Body of pancreas (tissue), 4 donors: ENCODE measurements at regions of chr3 and their contacts with region 1.

Region 1: GRCh38 chr3:58573640-58574039 is 3.6 kb downstream of the FAM107A start:
- DNase-seq: no peak
- ATAC-seq: no peak
- H3K4me3 ChIP-seq: no peak overlapping the region
- H3K27ac ChIP-seq: no peak overlapping the region
- H3K4me1 ChIP-seq: peaks cover 32% of the 10 kb centered on the region
- H3K27me3 ChIP-seq: no peaks in the 10 kb centered on the region
- CTCF ChIP-seq: no peak
- POLR2A ChIP-seq: no peak

Region 2: DNA sequence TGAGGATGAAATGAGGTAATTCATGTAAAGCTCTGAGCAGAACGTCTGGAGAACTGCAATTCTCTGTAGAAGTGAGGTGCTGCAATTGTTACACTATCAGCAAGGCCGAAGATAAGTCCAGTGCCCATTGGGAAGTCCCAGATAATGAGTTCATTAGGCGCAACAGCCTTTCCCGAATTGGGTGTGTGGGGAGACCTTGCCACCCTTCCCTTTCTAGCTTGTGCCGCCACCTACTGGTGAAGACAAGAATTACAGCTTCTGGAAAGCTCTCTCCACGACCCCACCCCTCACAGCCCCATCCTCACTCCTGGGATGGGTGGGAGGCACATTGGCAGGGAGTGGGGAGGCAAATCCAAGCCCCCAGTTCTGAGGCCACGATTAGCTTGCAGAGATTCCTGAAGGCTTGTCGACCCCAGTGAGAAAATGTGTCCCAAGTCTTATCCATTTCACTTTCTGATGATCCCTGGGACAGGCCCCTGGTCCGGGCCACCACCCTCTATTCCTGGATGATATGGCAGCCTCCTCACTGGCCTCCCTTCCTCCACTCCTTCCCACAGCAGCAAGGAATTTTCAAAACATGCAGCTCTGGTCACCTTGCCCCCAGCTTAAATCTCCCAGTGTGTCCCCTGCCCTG is 56.6 kb after region 1 on chr3:
- intact Hi-C with region 1: loop called (anchors 5 kb)
- DNase-seq: peak; percentile 68 to 75 (median 71)
- ATAC-seq: peak; percentile 49
- H3K4me3 ChIP-seq: no peak overlapping the region
- H3K27ac ChIP-seq: peak overlapping the region in 3 of 4 donors; percentile 59 to 73 (median 62)
- H3K4me1 ChIP-seq: peaks cover 42% of the 10 kb centered on the region
- H3K27me3 ChIP-seq: no peaks in the 10 kb centered on the region
- CTCF ChIP-seq: peak; percentile 79 to 94 (median 90)
- POLR2A ChIP-seq: no peak

Region 3: DNA sequence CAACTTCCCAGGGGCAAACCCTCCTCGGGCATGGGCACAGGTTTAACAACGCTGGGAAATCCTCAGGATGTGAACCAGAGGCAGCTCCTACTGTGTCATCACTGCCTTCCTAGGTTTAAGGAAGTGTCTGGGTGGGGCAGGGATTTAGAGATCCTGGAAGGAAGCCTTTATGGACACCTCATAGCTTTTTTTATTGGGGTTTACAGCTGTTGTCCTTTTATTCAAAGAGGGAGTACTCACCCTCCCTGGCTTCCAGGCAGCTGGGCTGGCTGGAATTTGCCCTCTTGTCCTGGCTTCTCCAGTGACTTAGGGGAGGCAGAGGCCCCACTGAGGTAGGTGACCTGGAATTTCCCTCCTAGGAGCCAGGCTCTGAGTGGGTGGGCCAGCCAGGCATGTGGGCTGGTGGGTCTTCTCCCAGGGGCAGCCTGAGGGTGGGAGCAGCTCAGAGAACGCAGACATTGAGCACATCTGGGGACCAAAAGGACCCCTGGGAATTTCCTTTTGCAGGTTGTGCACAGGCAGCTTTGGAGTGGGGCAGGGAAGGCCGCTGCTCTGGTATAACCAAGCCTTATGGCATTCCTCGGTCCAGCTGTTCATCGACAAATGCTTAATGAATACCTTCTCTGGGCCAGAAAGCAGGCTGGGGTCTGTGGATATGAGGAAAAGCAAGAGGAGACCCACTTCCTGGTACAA is 106.5 kb after region 1 on chr3:
- intact Hi-C with region 1: no loop called
- DNase-seq: no peak
- ATAC-seq: no peak
- H3K4me3 ChIP-seq: no peak overlapping the region
- H3K27ac ChIP-seq: no peak overlapping the region
- H3K4me1 ChIP-seq: no peaks in the 10 kb centered on the region
- H3K27me3 ChIP-seq: no peaks in the 10 kb centered on the region
- CTCF ChIP-seq: no peak
- POLR2A ChIP-seq: no peak

Region 4: DNA sequence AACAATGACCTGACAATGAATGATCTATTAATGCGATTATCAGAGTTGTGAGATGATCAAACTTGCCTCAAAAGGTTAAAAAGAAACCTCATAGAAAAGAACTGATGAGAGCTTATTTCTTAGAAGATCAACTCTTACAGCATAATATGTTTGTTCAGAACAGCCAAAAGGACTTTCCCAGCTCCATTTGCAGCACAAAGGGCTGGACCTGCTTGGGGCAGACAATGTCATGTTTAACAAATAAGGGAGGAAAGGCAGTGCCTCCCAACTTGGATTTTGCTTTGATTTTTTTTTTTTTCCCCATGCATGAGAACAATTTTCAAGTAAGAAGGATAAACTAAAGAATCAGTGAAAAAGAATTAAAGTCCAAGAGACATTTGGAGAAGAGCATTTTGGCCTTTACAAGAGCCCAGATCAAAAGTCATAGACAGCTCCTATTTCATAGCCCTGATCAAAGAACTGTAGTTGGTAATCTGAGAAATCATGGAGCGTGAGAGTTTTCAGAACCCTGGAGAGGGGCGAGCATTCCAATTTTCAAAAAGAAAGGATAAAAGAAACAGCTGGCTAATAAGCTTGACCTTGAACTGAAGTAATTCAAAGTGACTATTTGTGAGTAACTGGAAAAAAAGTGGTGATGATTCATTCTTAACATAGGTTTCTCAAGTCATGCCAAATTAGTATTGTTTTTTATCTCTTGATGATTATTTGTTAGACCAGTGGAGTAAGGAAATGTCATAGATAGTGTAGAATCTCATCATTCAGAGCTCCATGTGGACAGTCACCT is 612.1 kb after region 1 on chr3:
- intact Hi-C with region 1: no loop called
- DNase-seq: no peak
- ATAC-seq: no peak
- H3K4me3 ChIP-seq: no peak overlapping the region
- H3K27ac ChIP-seq: no peak overlapping the region
- H3K4me1 ChIP-seq: no peaks in the 10 kb centered on the region
- H3K27me3 ChIP-seq: no peaks in the 10 kb centered on the region
- CTCF ChIP-seq: no peak
- POLR2A ChIP-seq: no peak